ENCODE measurements at regions of chr16 and their contacts with region 1.

Region 1: GRCh38 chr16:4586291-4586690 is 28.4 kb downstream of the UBALD1 start:
- DNase-seq: no peak
- H3K4me3 Mint-ChIP-seq: no peak overlapping the region
- H3K27ac Mint-ChIP-seq: no peak overlapping the region
- H3K4me1 Mint-ChIP-seq: peaks cover 7% of the 10 kb centered on the region
- H3K27me3 Mint-ChIP-seq: no peaks in the 10 kb centered on the region
- CTCF ChIP-seq: no peak

Region 2: DNA sequence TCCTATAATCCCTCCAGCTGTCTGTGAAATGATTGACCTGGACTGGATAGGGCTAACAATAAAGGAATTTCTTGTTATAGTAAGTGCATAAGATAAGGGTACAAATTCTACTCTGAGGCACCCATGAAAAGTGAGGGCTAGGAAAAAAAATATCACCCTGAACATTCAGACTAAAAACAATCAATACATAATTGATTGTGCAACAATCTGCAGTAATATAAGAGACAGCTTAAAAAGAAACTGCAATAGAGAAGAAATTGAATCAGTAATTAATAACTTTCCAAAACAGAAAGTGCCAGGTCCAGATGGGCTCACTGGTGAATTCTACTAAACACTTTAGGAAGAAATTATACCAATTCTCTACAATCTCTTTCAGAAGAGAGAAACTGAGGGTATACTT is 661.5 kb before region 1 on chr16:
- CTCF ChIA-PET with region 1: no interaction called
- POLR2A ChIA-PET with region 1: no interaction called
- intact Hi-C with region 1: no loop called
- DNase-seq: no peak
- H3K4me3 Mint-ChIP-seq: no peak overlapping the region
- H3K27ac Mint-ChIP-seq: no peak overlapping the region
- H3K4me1 Mint-ChIP-seq: no peaks in the 10 kb centered on the region
- H3K27me3 Mint-ChIP-seq: peaks cover 12% of the 10 kb centered on the region
- CTCF ChIP-seq: no peak

Region 3: DNA sequence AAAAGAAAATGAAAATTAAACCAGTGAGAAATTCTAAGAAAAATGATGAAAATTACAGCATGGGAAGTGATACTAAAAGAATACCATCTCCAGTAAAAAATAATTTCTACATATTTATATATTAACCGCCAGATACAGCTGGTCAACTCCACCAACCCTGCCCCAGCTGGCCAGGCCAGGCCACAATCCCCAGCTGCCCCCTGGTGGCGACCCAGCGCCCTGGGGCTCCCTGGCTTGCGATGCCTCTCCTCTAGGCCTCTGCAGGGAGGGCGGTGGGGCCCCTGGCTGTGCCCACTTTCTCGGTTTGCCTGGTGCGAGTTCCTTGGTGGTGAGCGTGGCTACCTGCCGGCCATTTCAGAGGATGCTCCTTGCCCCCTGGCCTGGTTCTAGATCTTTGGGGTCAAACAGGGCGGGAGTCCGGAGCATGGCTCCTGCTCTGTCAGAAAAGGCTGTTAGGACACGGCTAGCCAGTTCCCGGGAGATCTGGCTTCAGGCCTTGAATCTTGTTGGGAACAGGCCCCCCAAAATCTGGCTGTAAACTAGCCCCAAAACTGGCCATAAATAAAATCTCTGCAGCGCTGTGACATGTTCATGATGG is 255.9 kb before region 1 on chr16:
- CTCF ChIA-PET with region 1: no interaction called
- POLR2A ChIA-PET with region 1: no interaction called
- intact Hi-C with region 1: no loop called
- DNase-seq: peak; percentile 76
- H3K4me3 Mint-ChIP-seq: no peak overlapping the region
- H3K27ac Mint-ChIP-seq: no peak overlapping the region
- H3K4me1 Mint-ChIP-seq: no peaks in the 10 kb centered on the region
- H3K27me3 Mint-ChIP-seq: no peaks in the 10 kb centered on the region
- CTCF ChIP-seq: peak; percentile 98

Region 4: DNA sequence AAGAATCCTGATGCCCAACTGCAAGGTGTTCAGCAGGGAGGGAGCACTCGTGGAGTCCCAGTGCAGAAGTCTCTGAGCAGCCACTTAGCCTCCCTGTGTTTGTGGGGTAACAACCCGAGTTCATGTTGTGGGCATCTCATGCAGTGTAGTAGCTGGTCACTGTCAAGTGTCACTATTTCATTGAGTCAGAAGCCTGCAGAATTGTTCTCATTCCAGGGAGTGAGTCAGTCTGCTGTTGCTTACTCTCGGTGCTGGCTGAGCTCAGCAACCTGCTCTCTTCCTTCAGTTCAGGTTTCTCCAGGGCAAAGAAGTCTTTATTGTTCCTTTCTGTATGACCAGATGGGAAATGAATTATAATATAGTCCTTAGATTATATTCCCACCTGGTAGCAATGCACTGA is 86.0 kb before region 1 on chr16:
- CTCF ChIA-PET with region 1: interaction called, 86 read pairs
- POLR2A ChIA-PET with region 1: interaction called, 3 read pairs
- intact Hi-C with region 1: no loop called
- DNase-seq: peak; percentile 66
- H3K4me3 Mint-ChIP-seq: no peak overlapping the region
- H3K27ac Mint-ChIP-seq: no peak overlapping the region
- H3K4me1 Mint-ChIP-seq: peaks cover 44% of the 10 kb centered on the region
- H3K27me3 Mint-ChIP-seq: no peaks in the 10 kb centered on the region
- CTCF ChIP-seq: no peak

Region 5: DNA sequence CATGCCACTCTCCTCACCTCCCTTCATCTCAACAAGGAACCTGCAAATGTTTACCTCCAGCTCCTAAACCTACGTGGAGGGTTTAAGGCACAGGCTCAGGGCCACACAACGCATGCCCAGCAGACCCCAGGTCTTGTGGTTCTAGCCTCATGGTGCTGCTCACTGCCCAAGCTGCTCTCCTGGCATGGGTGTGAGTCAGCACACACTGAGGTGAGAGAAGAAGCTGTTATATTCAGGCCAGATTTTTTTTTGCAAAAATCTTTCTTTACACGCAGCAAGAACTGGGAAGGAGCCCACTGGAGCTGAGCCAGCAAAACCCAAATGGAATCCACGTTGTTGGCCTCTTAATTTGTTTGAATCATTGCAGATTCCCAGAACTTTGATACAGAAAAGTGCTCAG is 35.7 kb before region 1 on chr16:
- CTCF ChIA-PET with region 1: interaction called, 12 read pairs
- POLR2A ChIA-PET with region 1: no interaction called
- intact Hi-C with region 1: loop called (anchors 5 kb)
- DNase-seq: no peak
- H3K4me3 Mint-ChIP-seq: no peak overlapping the region
- H3K27ac Mint-ChIP-seq: no peak overlapping the region
- H3K4me1 Mint-ChIP-seq: peaks cover 5% of the 10 kb centered on the region
- H3K27me3 Mint-ChIP-seq: peaks cover 27% of the 10 kb centered on the region
- CTCF ChIP-seq: no peak

Region 6: GRCh38 chr16:4601036-4601863 is 15.0 kb after region 1 on chr16:
- CTCF ChIA-PET with region 1: interaction called, 27 read pairs
- POLR2A ChIA-PET with region 1: interaction called, 5 read pairs
- intact Hi-C with region 1: no loop called
- DNase-seq: no peak
- H3K4me3 Mint-ChIP-seq: no peak overlapping the region
- H3K27ac Mint-ChIP-seq: no peak overlapping the region
- H3K4me1 Mint-ChIP-seq: no peaks in the 10 kb centered on the region
- H3K27me3 Mint-ChIP-seq: peaks cover 11% of the 10 kb centered on the region
- CTCF ChIP-seq: no peak

Region 7: GRCh38 chr16:4624015-4624826 is 37.9 kb after region 1 on chr16 and contains the start of gene MGRN1:
- CTCF ChIA-PET with region 1: interaction called, 15 read pairs
- POLR2A ChIA-PET with region 1: interaction called, 3 read pairs
- intact Hi-C with region 1: no loop called
- DNase-seq: peak; percentile 97
- H3K4me3 Mint-ChIP-seq: peak within 1 kb of the TSS; percentile 99
- H3K27ac Mint-ChIP-seq: peak within 1 kb of the TSS; percentile 99
- H3K4me1 Mint-ChIP-seq: peaks cover 13% of the 10 kb centered on the region
- H3K27me3 Mint-ChIP-seq: no peaks in the 10 kb centered on the region
- CTCF ChIP-seq: peak; percentile 89
- total RNA-seq, gene MGRN1: 61.3 and 62.9 TPM in 2 replicates

Measured in MCF 10A (cell line).